ENCODE measurements at regions of chr6 and their contacts with region 1.

Region 1: GRCh38 chr6:89098461-89098860 is 17.9 kb downstream of the PNRC1 start:
- DNase-seq: no peak
- CTCF ChIP-seq: no peak

Region 2: GRCh38 chr6:89110284-89110683 is 11.8 kb after region 1 on chr6:
- CTCF ChIA-PET with region 1: interaction called, 11 read pairs
- POLR2A ChIA-PET with region 1: no interaction called
- DNase-seq: no peak
- CTCF ChIP-seq: no peak

Region 3: DNA sequence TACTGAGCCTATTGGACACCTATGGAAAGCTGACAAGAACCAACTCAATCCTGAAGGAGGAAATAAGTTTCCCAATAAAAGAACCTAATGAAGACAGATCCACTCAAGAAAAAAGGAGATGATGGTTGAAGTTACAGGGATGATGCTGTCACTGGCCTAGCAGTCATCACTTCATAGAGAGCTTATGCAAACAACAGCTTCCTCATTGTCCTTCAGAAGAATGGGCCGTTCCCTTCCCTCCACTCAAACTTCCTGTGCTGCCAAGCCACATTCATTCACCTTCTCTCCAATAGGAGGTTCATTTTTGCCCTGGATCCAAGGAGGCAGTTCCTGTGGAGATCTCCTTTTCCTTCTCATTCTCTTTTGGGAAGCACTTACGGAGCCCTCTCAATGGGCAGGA is 33.6 kb after region 1 on chr6:
- CTCF ChIA-PET with region 1: no interaction called
- POLR2A ChIA-PET with region 1: no interaction called
- DNase-seq: no peak
- CTCF ChIP-seq: no peak

Measured in GM10248 (cell line).